ENCODE measurements at regions of chr17 and their contacts with region 1.

Region 1: DNA sequence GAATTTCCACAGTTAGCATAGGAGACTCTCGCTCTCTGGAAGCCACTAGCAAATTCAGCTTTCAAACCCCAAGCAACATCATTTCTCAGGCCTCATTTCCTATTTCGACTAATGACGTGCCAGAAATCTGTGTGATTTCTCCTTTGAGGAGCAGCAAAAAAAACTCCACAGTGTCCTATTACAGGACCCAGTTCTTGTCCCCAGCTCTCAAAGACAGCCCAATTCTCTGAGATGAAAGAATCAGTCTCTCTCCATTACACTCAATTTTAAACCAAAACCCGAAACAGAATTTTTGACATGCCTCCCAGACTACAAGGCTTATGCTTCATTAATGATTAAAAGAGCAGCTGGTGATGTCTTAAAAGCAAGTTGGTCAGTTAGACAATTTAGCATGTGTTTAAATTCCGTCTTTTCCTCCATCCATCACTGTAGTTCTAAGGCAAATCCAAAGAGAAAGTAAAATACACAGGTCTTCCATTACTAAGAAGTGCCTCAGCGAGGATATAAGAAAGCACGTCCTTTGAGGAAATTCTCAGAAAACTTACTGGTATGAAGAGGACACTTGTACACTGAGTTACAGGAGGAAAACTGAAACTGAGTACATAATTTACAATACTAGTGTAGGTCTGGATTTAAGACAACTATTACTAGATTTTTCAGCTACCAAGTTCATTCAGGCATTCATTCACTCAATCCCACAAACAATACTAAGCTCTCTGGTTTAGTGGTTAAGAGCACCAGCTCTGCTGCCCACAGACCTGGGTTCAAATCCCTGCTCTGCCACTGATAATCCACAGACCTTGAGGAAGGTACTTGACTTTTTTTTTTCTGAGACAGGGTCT is 12.5 kb downstream of the TOM1L2 start:
- DNase-seq: no peak
- H3K4me3 ChIP-seq: peak overlapping the region in 39 of 59 donors; percentile 1 to 46 (median 21)
- H3K27ac ChIP-seq: peak overlapping the region in 57 of 59 donors; percentile 12 to 85 (median 62)
- H3K27me3 ChIP-seq: no peaks in the 10 kb centered on the region
- CTCF ChIP-seq: no peak

Region 2: GRCh38 chr17:17663160-17664063 is 296.3 kb before region 1 on chr17:
- intact Hi-C with region 1: no loop called
- DNase-seq: peak in 9 of 10 donors; percentile 29 to 91 (median 76)
- H3K4me3 ChIP-seq: peak overlapping the region in 2 of 59 donors; percentile 5 to 17
- H3K27ac ChIP-seq: peak overlapping the region in 2 of 59 donors; percentile 4 to 22
- H3K27me3 ChIP-seq: no peaks in the 10 kb centered on the region
- CTCF ChIP-seq: no peak

Region 3: DNA sequence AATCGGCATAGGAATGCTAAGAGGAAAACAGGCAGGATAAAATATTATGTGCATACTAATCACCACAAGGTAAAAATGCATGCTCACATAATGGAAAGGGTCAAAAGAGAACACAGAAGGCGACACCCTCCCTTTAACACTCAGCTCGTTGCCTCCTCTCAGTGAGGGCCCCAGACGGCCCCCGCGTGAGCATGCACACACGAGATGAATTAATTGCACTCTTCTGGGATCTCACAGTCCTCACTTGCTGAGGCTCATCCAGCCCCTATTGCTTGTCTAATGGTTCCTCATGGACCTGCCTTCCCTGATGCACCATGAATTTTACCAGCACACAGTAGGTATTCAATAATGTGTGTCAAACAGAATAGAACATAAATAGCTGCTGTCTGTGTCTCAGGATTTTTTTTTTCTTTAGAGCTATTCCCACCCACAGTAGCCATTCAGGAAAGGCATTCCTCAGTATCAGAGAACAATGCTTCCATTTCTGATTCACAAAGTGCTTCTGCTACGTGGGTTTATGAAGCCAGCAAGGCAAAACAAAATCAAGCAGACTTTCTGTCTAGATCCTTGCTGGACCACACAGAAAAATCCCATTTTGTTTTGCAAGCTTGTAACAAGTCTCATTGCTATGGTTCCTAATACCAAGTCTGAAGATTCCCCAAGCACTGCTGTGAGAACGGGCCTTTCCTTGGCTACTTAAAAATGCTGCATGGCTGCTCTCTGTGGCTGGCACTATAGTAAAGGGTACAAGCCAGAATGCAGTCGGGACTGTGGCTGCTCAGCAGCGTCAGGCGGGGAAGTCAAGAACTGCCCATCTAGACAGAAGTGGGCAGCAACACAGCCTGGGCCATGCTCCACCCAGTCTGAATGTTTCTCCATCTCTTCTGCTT is 31.1 kb before region 1 on chr17:
- intact Hi-C with region 1: loop called in 1 of 2 experiments (anchors 5 kb)
- DNase-seq: peak in 8 of 10 donors; percentile 51 to 75 (median 62)
- H3K4me3 ChIP-seq: peak overlapping the region in 31 of 59 donors; percentile 1 to 45 (median 14)
- H3K27ac ChIP-seq: peak overlapping the region; percentile 12 to 97 (median 87)
- H3K27me3 ChIP-seq: no peaks in the 10 kb centered on the region
- CTCF ChIP-seq: peak in 7 of 56 donors; percentile 9 to 27 (median 11)

Region 4: GRCh38 chr17:17983376-17983775 is 23.6 kb after region 1 on chr17:
- intact Hi-C with region 1: no loop called
- DNase-seq: no peak
- H3K4me3 ChIP-seq: no peak overlapping the region
- H3K27ac ChIP-seq: no peak overlapping the region
- H3K27me3 ChIP-seq: no peaks in the 10 kb centered on the region
- CTCF ChIP-seq: no peak

Measured in dorsolateral prefrontal cortex (tissue), 120 donors.